ENCODE measurements at regions of chr21 and their contacts with region 1.

Region 1: GRCh38 chr21:28932717-28933116 is 60.0 kb downstream of the LTN1 start:
- DNase-seq: no peak
- ATAC-seq: no peak
- H3K4me3 Mint-ChIP-seq: no peak overlapping the region
- H3K27ac Mint-ChIP-seq: no peak overlapping the region
- H3K4me1 Mint-ChIP-seq: no peaks in the 10 kb centered on the region
- H3K27me3 Mint-ChIP-seq: no peaks in the 10 kb centered on the region
- CTCF ChIP-seq: no peak

Region 2: GRCh38 chr21:28884976-28885852 is 47.5 kb before region 1 on chr21:
- CTCF ChIA-PET with region 1: no interaction called
- POLR2A ChIA-PET with region 1: no interaction called
- intact Hi-C with region 1: loop called (anchors 5 kb)
- DNase-seq: peak; percentile 88
- ATAC-seq: peak; percentile 95
- H3K4me3 Mint-ChIP-seq: peak overlapping the region; percentile 88
- H3K27ac Mint-ChIP-seq: peak overlapping the region; percentile 93
- H3K4me1 Mint-ChIP-seq: peaks cover 20% of the 10 kb centered on the region
- H3K27me3 Mint-ChIP-seq: peaks cover 7% of the 10 kb centered on the region
- CTCF ChIP-seq: no peak

Region 3: GRCh38 chr21:29888437-29888836 is 955.7 kb after region 1 on chr21:
- CTCF ChIA-PET with region 1: no interaction called
- POLR2A ChIA-PET with region 1: no interaction called
- intact Hi-C with region 1: no loop called
- DNase-seq: no peak
- ATAC-seq: no peak
- H3K4me3 Mint-ChIP-seq: no peak overlapping the region
- H3K27ac Mint-ChIP-seq: no peak overlapping the region
- H3K4me1 Mint-ChIP-seq: no peaks in the 10 kb centered on the region
- H3K27me3 Mint-ChIP-seq: no peaks in the 10 kb centered on the region
- CTCF ChIP-seq: no peak

Measured in activated B cell treated with CpG ODN at 0.5 μM for 24 hours (primary cell).